MCF 10A (cell line): ENCODE measurements at regions of chr11 and their contacts with region 1.

Region 1: GRCh38 chr11:6377902-6378639 is 12.2 kb upstream of the SMPD1 start:
- DNase-seq: no peak
- H3K4me3 Mint-ChIP-seq: no peak overlapping the region
- H3K27ac Mint-ChIP-seq: no peak overlapping the region
- H3K4me1 Mint-ChIP-seq: no peaks in the 10 kb centered on the region
- H3K27me3 Mint-ChIP-seq: peaks cover 12% of the 10 kb centered on the region
- CTCF ChIP-seq: no peak

Region 2: DNA sequence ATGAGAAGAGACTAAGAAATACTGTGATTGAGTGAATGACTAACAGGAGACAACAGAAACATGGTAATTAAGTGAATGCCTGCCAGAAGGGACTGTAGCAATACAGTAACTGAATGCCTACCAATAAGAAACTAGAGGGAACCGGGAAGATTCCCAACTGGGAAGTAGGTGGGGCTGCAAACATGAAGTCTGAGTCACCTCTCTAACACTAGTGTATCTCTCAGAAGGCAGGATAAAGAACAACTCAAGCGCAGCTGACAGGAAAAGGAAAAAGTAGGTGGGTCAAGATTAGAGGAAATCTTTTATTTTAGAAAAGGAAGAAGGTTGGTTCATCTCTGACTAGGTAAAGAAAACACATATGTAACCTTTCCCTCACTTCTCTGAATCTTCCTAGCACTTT is 158.7 kb before region 1 on chr11:
- CTCF ChIA-PET with region 1: no interaction called
- POLR2A ChIA-PET with region 1: no interaction called
- intact Hi-C with region 1: no loop called
- DNase-seq: peak; percentile 95
- H3K4me3 Mint-ChIP-seq: no peak overlapping the region
- H3K27ac Mint-ChIP-seq: peak overlapping the region; percentile 57
- H3K4me1 Mint-ChIP-seq: peaks cover 13% of the 10 kb centered on the region
- H3K27me3 Mint-ChIP-seq: no peaks in the 10 kb centered on the region
- CTCF ChIP-seq: no peak

Region 3: DNA sequence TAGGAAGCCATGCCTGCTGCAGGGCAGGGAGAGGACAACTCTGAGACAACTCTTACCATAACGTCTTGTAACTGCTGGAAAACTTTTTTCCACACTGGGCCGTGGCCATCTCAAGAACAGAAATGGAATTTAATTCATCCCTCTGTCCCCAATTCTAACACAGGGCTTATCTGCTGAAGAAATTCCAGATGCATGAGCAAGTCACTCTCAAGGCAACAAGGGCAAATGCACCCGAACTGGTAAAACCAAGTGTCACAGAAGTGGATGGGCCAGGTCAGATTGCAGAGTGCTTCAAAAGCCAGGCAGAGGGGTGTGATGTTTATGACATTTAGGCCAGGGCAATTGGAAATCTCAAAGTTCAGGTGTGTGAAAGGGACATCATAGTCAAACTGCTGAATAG is 19.6 kb after region 1 on chr11:
- CTCF ChIA-PET with region 1: interaction called, 20 read pairs
- POLR2A ChIA-PET with region 1: no interaction called
- intact Hi-C with region 1: no loop called
- DNase-seq: no peak
- H3K4me3 Mint-ChIP-seq: no peak overlapping the region
- H3K27ac Mint-ChIP-seq: no peak overlapping the region
- H3K4me1 Mint-ChIP-seq: no peaks in the 10 kb centered on the region
- H3K27me3 Mint-ChIP-seq: peaks cover 32% of the 10 kb centered on the region
- CTCF ChIP-seq: no peak

Region 4: DNA sequence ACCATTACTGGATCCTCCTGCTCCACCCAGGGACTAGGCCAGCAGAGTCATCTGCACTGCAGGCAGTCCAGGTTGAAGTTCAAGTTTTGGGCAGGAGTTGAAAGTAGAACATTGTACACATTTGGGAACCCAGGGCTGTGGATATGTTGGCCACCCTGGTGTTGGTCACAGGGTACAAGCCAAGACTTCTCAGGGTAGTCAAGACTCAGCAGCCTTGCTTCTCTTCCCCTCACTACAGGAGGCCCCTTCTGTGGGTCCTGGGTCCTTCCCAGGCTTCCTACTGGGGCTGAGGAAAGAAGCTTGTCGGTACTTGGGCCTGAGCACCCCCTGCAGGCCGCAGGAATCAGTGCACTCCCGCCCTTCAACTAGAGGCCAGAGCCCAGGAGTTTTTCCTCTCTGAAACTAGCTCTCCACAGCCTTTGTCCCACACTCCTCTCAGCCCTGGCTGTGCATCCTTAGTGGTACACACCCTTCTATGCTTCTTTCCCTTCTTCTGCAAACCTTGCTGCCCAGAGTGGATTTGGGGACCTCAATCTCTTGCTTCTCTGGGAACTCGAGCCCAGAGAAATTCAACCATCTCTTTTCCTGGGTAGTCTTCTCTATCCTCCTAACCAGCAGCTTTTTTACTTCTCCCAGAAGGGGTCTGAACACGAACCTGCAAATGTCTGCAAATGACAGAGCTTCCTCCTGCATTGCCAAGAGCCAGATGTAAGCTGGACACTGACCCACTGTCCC is 65.4 kb after region 1 on chr11:
- CTCF ChIA-PET with region 1: interaction called, 469 read pairs
- POLR2A ChIA-PET with region 1: interaction called, 18 read pairs
- intact Hi-C with region 1: loop called (anchors 1 kb)
- DNase-seq: peak; percentile 57
- H3K4me3 Mint-ChIP-seq: no peak overlapping the region
- H3K27ac Mint-ChIP-seq: no peak overlapping the region
- H3K4me1 Mint-ChIP-seq: no peaks in the 10 kb centered on the region
- H3K27me3 Mint-ChIP-seq: no peaks in the 10 kb centered on the region
- CTCF ChIP-seq: peak; percentile 88

Region 5: DNA sequence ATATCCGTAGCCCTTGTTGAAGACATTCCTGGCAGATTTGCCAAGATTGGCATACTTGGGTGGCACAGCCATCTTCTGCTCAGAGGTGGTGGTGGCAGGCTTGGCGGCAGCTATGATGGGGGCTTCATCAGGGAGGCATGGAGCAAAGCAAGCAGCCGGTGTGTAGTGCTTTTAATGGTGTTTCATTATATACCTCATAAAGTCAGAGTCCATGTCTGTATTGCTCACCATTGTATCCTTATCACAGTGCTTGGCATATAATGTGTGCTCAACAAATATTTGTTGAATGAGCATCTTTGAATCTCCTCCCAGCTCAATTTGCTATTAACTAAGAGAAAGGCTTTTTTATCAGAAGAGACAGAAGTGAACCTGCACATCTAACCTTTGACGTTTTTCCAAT is 111.2 kb after region 1 on chr11:
- CTCF ChIA-PET with region 1: interaction called, 47 read pairs
- POLR2A ChIA-PET with region 1: interaction called, 3 read pairs
- intact Hi-C with region 1: no loop called
- DNase-seq: no peak
- H3K4me3 Mint-ChIP-seq: no peak overlapping the region
- H3K27ac Mint-ChIP-seq: no peak overlapping the region
- H3K4me1 Mint-ChIP-seq: no peaks in the 10 kb centered on the region
- H3K27me3 Mint-ChIP-seq: no peaks in the 10 kb centered on the region
- CTCF ChIP-seq: no peak

Region 6: GRCh38 chr11:6531267-6531752 is 153.2 kb after region 1 on chr11:
- CTCF ChIA-PET with region 1: interaction called, 10 read pairs
- POLR2A ChIA-PET with region 1: no interaction called
- intact Hi-C with region 1: no loop called
- DNase-seq: peak; percentile 56
- H3K4me3 Mint-ChIP-seq: no peak overlapping the region
- H3K27ac Mint-ChIP-seq: no peak overlapping the region
- H3K4me1 Mint-ChIP-seq: no peaks in the 10 kb centered on the region
- H3K27me3 Mint-ChIP-seq: no peaks in the 10 kb centered on the region
- CTCF ChIP-seq: peak; percentile 74